PC-3 (cell line): ENCODE measurements at regions of chr10 and their contacts with region 1.

Region 1: DNA sequence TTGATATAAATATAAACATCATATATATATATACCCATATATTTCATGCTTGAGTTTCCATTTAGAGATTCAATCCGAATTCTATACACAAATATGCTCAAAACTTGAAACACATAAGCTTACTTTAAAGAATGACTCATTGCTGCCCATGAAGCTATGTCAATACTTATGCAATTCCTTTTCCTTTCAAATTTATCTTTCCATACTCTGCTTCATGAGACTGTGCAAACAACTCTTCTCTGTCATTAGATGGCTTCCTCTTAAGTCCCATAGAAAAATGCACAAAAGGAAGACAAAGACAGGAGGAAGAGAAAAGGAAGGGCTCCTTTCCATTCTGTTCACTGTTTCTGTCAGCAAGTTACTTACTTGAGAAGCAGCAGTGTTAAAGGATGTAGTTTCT is 895.7 kb upstream of the SORCS1 start:
- DNase-seq: peak; percentile 76
- ATAC-seq: peak; percentile 86
- H3K4me3 ChIP-seq: no peak overlapping the region
- H3K27ac ChIP-seq: peak overlapping the region; percentile 95
- H3K4me1 ChIP-seq: peaks cover 36% of the 10 kb centered on the region
- H3K27me3 ChIP-seq: no peaks in the 10 kb centered on the region
- CTCF ChIP-seq: no peak

Region 2: GRCh38 chr10:107971973-107972372 is 88.3 kb before region 1 on chr10:
- CTCF ChIA-PET with region 1: no interaction called
- POLR2A ChIA-PET with region 1: no interaction called
- intact Hi-C with region 1: loop called (anchors 5 kb)
- DNase-seq: peak; percentile 93
- ATAC-seq: peak; percentile 82
- H3K4me3 ChIP-seq: no peak overlapping the region
- H3K27ac ChIP-seq: peak overlapping the region; percentile 99
- H3K4me1 ChIP-seq: peaks cover 34% of the 10 kb centered on the region
- H3K27me3 ChIP-seq: no peaks in the 10 kb centered on the region
- CTCF ChIP-seq: no peak

Region 3: DNA sequence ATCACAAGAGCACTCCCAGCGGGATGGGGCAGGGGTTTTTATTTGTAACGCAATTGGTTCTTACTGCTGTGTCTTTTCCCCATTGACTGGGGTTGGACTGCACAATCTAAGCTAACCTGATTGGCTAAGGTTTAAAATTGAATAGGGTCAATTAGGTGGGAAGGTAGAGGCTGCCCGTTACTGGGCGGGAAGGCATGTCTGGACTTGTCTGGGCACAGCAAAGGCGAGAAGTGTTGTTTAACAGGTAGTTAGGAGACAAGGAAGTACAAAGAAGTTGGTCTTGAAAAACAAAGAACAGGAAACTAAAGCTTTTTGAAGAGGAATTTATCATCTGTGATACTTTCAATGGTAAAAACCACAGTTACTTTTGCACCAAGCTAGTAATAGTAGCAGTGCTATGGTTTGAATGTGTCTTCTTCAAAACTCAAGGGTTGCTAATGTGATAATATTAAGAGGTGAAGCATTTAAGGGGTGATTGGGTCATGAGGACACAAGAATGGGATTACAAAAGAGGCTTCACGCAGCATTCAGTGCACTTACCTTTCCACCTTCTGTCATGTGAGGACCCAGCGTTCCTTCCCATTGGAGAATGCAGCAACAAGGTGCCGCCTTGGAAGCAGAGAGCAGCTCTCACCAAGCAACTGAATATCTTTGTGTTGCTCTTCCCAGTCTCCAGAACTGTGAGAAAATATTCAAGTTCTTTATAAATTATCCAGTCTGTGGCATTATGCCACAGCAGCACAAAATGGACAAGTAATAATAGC is 20.2 kb before region 1 on chr10:
- CTCF ChIA-PET with region 1: no interaction called
- POLR2A ChIA-PET with region 1: no interaction called
- intact Hi-C with region 1: no loop called
- DNase-seq: no peak
- ATAC-seq: no peak
- H3K4me3 ChIP-seq: no peak overlapping the region
- H3K27ac ChIP-seq: no peak overlapping the region
- H3K4me1 ChIP-seq: no peaks in the 10 kb centered on the region
- H3K27me3 ChIP-seq: no peaks in the 10 kb centered on the region
- CTCF ChIP-seq: no peak

Region 4: GRCh38 chr10:108070789-108071188 is 10.5 kb after region 1 on chr10:
- CTCF ChIA-PET with region 1: no interaction called
- POLR2A ChIA-PET with region 1: no interaction called
- intact Hi-C with region 1: no loop called
- DNase-seq: peak; percentile 22
- ATAC-seq: peak; percentile 54; the same call in 1 of the 2 replicates
- H3K4me3 ChIP-seq: no peak overlapping the region
- H3K27ac ChIP-seq: no peak overlapping the region
- H3K4me1 ChIP-seq: 0 out of 2 replicates have a peak, but pooled peaks cover 5% of the 10 kb centered on the region
- H3K27me3 ChIP-seq: no peaks in the 10 kb centered on the region
- CTCF ChIP-seq: no peak

Region 5: GRCh38 chr10:108090476-108091215 is 30.4 kb after region 1 on chr10:
- CTCF ChIA-PET with region 1: no interaction called
- POLR2A ChIA-PET with region 1: interaction called, 14 read pairs
- intact Hi-C with region 1: no loop called
- DNase-seq: peak; percentile 3
- ATAC-seq: no peak
- H3K4me3 ChIP-seq: no peak overlapping the region
- H3K27ac ChIP-seq: no peak overlapping the region
- H3K4me1 ChIP-seq: no peaks in the 10 kb centered on the region
- H3K27me3 ChIP-seq: no peaks in the 10 kb centered on the region
- CTCF ChIP-seq: no peak